ENCODE measurements at regions of chr19 and their contacts with region 1.

Region 1: GRCh38 chr19:15154002-15154612 is 46.7 kb downstream of the NOTCH3 start:
- DNase-seq: peak in 1 of 9 donors; percentile 8
- ATAC-seq: peak; percentile 63
- H3K4me3 ChIP-seq: no peak overlapping the region
- H3K4me3 Mint-ChIP-seq: no peak overlapping the region
- H3K27ac ChIP-seq: no peak overlapping the region
- H3K27ac Mint-ChIP-seq: no peak overlapping the region
- H3K4me1 ChIP-seq: no peaks in the 10 kb centered on the region
- H3K4me1 Mint-ChIP-seq: peaks cover 4 to 14% (median 7%) of the 10 kb centered on the region in 7 donors
- H3K27me3 ChIP-seq: no peaks in the 10 kb centered on the region
- H3K27me3 Mint-ChIP-seq: peaks cover 5 to 12% (median 8%) of the 10 kb centered on the region in 5 donors

Region 2: DNA sequence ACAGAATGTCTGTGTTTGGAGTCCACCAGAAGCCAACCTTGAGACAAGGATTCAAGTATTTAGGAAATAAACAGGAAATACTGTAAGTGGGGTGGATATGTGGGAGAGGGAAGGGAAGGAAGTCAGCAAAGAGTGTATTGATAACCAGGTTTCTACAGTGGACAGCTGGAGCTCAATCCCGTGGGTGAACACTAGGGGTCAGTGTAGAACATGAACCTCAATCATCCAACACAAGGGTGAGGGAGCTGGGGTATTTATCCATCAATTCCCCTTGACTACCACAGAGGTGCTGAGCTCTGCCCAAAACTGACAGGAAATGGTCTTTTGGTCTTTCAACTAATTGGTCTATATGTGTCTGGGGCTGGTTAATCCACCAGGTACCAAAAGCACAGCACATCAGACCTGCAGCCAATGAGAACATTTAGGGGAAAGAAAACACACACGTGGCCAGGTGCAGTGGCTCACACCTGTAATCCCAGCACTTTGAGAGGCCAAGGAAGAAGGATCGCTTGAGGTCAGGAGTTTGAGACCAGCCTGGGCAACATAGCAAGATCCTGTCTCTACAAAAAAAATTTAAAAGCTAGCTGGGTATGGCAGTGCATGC is 52.5 kb before region 1 on chr19:
- CTCF ChIA-PET with region 1: interaction called, 50 read pairs
- POLR2A ChIA-PET with region 1: no interaction called
- intact Hi-C with region 1: loop called (anchors 1 kb)
- DNase-seq: peak in 7 of 9 donors; percentile 21 to 57 (median 49)
- ATAC-seq: peak; percentile 79
- H3K4me3 ChIP-seq: no peak overlapping the region
- H3K4me3 Mint-ChIP-seq: no peak overlapping the region
- H3K27ac ChIP-seq: no peak overlapping the region
- H3K27ac Mint-ChIP-seq: peak overlapping the region in 2 of 9 donors; percentile 8 to 38
- H3K4me1 ChIP-seq: no peaks in the 10 kb centered on the region
- H3K4me1 Mint-ChIP-seq: peaks cover under 1 to 8% (median 6%) of the 10 kb centered on the region in 7 donors
- H3K27me3 ChIP-seq: no peaks in the 10 kb centered on the region
- H3K27me3 Mint-ChIP-seq: peaks cover 0 to 7% (median 2%) of the 10 kb centered on the region in 5 donors

Region 3: DNA sequence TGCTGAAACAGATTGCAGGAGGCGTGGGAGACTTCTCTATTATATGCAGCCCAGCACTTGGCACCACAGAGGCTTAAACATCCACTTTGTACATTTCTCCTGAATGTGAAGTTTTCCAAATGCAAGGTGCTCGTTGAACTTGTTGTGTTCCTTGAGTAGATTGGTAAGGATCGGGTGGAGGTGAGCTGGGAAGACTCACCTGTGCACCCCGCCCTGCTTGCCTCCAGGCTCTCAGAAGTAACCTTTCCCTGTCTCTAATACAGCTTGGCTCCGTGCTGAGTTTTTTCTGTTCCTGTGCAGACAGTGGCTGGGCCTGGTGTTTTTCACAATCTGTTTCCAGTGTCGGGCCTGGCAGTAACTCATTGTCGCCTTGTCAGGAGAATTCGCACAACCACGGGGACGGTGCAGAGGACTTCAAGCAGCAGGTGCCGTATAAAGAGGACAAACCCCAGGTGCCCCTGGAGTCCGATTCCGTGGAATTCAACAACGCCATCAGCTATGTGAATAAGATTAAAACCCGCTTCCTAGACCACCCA is 1687.4 kb after region 1 on chr19:
- CTCF ChIA-PET with region 1: no interaction called
- POLR2A ChIA-PET with region 1: no interaction called
- intact Hi-C with region 1: no loop called
- DNase-seq: no peak
- ATAC-seq: no peak
- H3K4me3 ChIP-seq: no peak overlapping the region
- H3K4me3 Mint-ChIP-seq: no peak overlapping the region
- H3K27ac ChIP-seq: no peak overlapping the region
- H3K27ac Mint-ChIP-seq: no peak overlapping the region
- H3K4me1 ChIP-seq: no peaks in the 10 kb centered on the region
- H3K4me1 Mint-ChIP-seq: peaks cover 0 to 22% (median 11%) of the 10 kb centered on the region in 7 donors
- H3K27me3 ChIP-seq: no peaks in the 10 kb centered on the region
- H3K27me3 Mint-ChIP-seq: no peaks in the 10 kb centered on the region